ENCODE measurements at regions of chr1 and their contacts with region 1.

Region 1: DNA sequence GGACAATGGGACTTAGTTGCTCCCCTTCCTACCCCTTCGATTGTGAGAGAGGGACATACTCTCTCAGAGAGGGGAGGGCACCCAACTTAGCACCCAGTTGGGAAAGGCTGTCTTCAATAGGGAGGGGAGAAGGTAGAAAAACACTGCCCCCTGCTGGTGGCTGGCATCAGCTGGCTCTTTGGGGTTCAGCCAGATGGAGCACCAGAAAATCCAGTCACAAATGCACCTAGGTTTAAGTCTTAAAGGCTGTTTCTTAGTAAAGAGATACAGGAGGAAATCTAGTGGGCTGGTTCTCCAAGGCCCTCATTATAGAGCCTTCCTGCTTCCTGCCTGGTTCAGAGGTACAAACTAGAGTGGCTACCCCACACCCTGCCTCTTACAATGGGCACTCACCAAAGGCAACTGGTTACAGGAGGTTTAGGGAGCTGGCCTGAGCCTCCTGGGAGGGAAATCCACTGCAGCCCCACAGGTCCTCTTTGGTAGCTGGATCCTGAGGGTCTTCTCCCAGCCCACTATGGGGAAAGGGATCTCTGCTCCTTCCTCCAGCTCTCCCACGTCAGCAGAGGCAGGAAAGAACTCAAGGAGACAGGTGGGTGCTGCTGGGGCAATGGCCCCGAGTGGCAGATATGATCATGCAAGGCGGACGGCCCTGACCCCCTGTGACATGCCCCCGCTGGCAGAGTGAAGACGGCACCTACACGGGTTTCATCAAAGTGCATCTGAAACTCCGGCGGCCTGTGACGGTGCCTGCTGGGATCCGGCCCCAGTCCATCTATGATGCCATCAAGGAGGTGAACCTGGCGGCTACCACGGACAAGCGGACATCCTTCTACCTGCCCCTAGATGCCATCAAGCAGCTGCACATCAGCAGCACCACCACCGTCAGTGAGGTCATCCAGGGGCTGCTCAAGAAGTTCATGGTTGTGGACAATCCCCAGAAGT is 28.3 kb downstream of the EIF2D start:
- DNase-seq: peak; percentile 62 to 72
- ATAC-seq: peak; percentile 79 to 92
- H3K4me3 ChIP-seq: no peak overlapping the region
- H3K27ac ChIP-seq: no peak overlapping the region
- H3K4me1 ChIP-seq: no peaks in the 10 kb centered on the region
- CTCF ChIP-seq: peak; percentile 94
- EP300 ChIP-seq: no peak
- POLR2A ChIP-seq: no peak
- RAD21 ChIP-seq: peak; percentile 86 to 93

Region 2: DNA sequence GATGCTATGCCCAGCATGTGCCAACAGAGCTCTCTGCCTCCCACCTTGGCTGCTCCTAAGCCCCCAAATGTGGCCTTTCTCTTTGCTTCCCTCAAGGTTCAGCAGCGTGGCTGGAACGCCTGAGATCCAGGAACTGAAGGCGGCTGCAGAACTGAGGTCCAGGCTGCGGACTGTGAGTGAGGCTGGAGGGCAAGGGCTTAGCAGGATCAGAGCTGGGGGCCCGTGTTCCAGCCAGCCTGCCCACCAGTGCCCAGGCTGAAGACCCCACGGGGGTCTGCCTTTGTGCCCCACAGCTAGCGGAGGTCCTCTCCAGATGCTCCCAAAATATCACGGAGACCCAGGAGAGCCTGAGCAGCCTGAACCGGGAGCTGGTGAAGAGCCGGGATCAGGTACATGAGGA is 99.1 kb before region 1 on chr1:
- CTCF ChIA-PET with region 1: interaction called, 188 read pairs
- POLR2A ChIA-PET with region 1: no interaction called
- DNase-seq: no peak
- ATAC-seq: no peak
- H3K4me3 ChIP-seq: no peak overlapping the region
- H3K27ac ChIP-seq: no peak overlapping the region
- H3K4me1 ChIP-seq: peaks cover 11% of the 10 kb centered on the region
- CTCF ChIP-seq: no peak
- EP300 ChIP-seq: no peak
- POLR2A ChIP-seq: no peak
- RAD21 ChIP-seq: no peak

Region 3: DNA sequence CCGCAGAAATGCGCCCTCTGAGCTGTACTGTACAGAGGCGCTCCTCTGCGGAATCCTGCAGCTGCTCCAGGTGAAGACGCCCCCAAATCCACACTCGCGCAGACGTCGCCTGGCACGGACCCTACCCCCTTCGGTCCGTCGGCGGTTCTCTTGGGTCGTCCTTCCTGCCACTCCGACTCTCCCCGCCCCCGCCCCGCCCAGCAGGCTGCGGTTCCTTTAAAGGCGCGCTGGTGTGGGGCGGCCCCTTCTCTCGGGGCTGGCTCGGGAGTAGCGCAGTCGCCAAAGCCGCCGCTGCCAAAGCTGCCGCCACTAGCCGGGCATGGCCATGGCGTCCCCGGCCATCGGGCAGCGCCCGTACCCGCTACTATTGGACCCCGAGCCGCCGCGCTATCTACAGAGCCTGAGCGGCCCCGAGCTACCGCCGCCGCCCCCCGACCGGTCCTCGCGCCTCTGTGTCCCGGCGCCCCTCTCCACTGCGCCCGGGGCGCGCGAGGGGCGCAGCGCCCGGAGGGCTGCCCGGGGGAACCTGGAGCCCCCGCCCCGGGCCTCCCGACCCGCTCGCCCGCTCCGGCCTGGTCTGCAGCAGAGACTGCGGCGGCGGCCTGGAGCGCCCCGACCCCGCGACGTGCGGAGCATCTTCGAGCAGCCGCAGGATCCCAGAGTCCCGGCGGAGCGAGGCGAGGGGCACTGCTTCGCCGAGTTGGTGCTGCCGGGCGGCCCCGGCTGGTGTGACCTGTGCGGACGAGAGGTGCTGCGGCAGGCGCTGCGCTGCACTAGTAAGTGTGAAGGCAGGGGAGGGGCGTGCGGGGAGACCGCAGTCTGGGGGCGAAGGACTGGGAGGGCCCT is 76.5 kb before region 1 on chr1 and contains the start of gene RASSF5:
- CTCF ChIA-PET with region 1: interaction called, 26 read pairs
- POLR2A ChIA-PET with region 1: no interaction called
- DNase-seq: peak; percentile 55 to 73
- ATAC-seq: peak; percentile 80 to 90
- H3K4me3 ChIP-seq: peak within 1 kb of the TSS; percentile 55
- H3K27ac ChIP-seq: peak within 1 kb of the TSS; percentile 19 to 85; a peak in 5 of 6 replicates
- H3K4me1 ChIP-seq: peaks cover 16% of the 10 kb centered on the region
- CTCF ChIP-seq: no peak
- EP300 ChIP-seq: no peak
- POLR2A ChIP-seq: peak; percentile 86
- RAD21 ChIP-seq: no peak
- polyA plus RNA-seq, gene RASSF5: 2.0 and 2.2 TPM in 2 replicates

Region 4: GRCh38 chr1:206544562-206545257 is 39.3 kb before region 1 on chr1:
- CTCF ChIA-PET with region 1: interaction called, 219 read pairs
- POLR2A ChIA-PET with region 1: no interaction called
- DNase-seq: peak; percentile 57 to 79
- ATAC-seq: peak; percentile 92 to 96
- H3K4me3 ChIP-seq: no peak overlapping the region
- H3K27ac ChIP-seq: no peak overlapping the region
- H3K4me1 ChIP-seq: no peaks in the 10 kb centered on the region
- CTCF ChIP-seq: peak; percentile 85
- EP300 ChIP-seq: no peak
- POLR2A ChIP-seq: no peak
- RAD21 ChIP-seq: peak; percentile 64 to 72

Region 5: GRCh38 chr1:206563367-206564207 is 20.4 kb before region 1 on chr1:
- CTCF ChIA-PET with region 1: interaction called, 59 read pairs
- POLR2A ChIA-PET with region 1: no interaction called
- DNase-seq: no peak
- ATAC-seq: no peak
- H3K4me3 ChIP-seq: no peak overlapping the region
- H3K27ac ChIP-seq: no peak overlapping the region
- H3K4me1 ChIP-seq: peaks cover 6% of the 10 kb centered on the region; the same call in 1 of the 3 replicates
- CTCF ChIP-seq: no peak
- EP300 ChIP-seq: no peak
- POLR2A ChIP-seq: no peak
- RAD21 ChIP-seq: no peak

Region 6: DNA sequence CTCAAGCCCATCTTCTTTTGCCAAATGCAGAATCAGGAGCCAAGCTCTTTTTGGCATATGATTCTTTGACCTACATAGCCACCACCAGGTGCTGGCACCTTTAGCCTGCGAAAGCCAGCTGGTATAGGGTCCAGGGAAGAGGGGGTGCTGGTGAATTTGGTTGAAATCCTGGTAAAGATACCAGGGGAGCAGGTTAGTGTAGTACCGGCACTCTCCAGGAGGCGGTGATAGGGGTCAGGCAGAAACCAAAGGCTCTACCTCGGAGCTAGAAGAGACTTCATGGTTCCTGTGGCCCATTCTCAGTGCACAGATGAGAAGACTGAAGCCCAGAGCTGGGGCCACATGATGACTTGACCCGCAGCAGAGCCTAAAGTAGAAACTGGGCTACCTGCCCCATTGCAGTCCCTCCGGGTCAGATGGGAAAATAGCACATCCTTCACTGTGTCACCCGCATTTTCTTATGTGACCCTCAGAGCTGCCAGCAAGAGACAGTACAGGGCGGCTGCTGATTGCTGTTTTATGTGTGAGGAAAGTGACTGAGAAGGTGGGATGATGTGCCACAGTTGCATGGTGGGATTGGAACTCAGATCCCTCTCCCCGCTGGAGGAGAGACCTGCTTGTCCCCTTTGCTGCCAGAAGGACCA is 150.6 kb after region 1 on chr1:
- CTCF ChIA-PET with region 1: no interaction called
- POLR2A ChIA-PET with region 1: no interaction called
- DNase-seq: peak; percentile 43 to 78
- ATAC-seq: peak; percentile 60 to 84; a peak in 4 of 6 replicates
- H3K4me3 ChIP-seq: no peak overlapping the region
- H3K27ac ChIP-seq: no peak overlapping the region
- H3K4me1 ChIP-seq: peaks cover 6% of the 10 kb centered on the region; the same call in 1 of the 3 replicates
- CTCF ChIP-seq: peak; percentile 65
- EP300 ChIP-seq: no peak
- POLR2A ChIP-seq: no peak
- RAD21 ChIP-seq: peak; percentile 73 to 75

Region 7: DNA sequence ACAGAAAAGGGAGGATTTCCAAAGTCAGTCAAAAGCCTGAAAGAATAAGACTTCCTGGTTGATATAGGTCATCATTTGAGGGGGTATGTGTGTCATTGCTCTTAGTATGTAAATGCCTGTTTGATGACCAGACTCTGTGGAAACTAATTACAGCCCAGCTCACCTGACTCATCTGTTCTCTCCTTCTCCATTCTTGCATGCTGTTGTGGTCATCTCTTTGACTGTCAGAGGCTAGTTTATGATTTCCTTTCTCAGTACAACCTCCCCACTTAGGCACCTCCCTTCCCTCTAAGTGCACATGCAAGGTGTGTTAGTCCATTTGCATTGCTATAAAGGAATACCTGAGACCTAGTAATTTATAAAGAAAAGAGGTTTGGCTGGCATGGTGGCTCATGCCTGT is 451.0 kb after region 1 on chr1:
- CTCF ChIA-PET with region 1: no interaction called
- POLR2A ChIA-PET with region 1: no interaction called
- DNase-seq: no peak
- ATAC-seq: no peak
- H3K4me3 ChIP-seq: no peak overlapping the region
- H3K27ac ChIP-seq: 0 out of 6 replicates have a peak overlapping the region, but pooled peaks of 1 of the 2 experiments have one; percentile 1
- H3K4me1 ChIP-seq: peaks cover 59% of the 10 kb centered on the region
- CTCF ChIP-seq: no peak
- EP300 ChIP-seq: no peak
- POLR2A ChIP-seq: no peak
- RAD21 ChIP-seq: no peak